Caco-2 (cell line): ENCODE measurements at regions of chr7 and their contacts with region 1.

Region 1: GRCh38 chr7:2800931-2801688 is 43.0 kb downstream of the GNA12 start:
- DNase-seq: no peak
- H3K4me3 ChIP-seq: no peak overlapping the region
- H3K4me3 Mint-ChIP-seq: peak overlapping the region; percentile 84
- H3K27ac Mint-ChIP-seq: peak overlapping the region; percentile 96
- H3K4me1 ChIP-seq: peaks cover 55% of the 10 kb centered on the region
- H3K4me1 Mint-ChIP-seq: peaks cover 56% of the 10 kb centered on the region
- H3K27me3 ChIP-seq: no peaks in the 10 kb centered on the region
- H3K27me3 Mint-ChIP-seq: no peaks in the 10 kb centered on the region
- CTCF ChIP-seq: no peak

Region 2: GRCh38 chr7:2403014-2403717 is 397.9 kb before region 1 on chr7 and contains the start of gene CHST12:
- CTCF ChIA-PET with region 1: no interaction called
- POLR2A ChIA-PET with region 1: no interaction called
- intact Hi-C with region 1: no loop called
- DNase-seq: peak; percentile 95 to 97
- H3K4me3 ChIP-seq: peak within 1 kb of the TSS; percentile 79
- H3K4me3 Mint-ChIP-seq: peak within 1 kb of the TSS; percentile 76
- H3K27ac Mint-ChIP-seq: no peak within 1 kb of the TSS
- H3K4me1 ChIP-seq: peaks cover 6% of the 10 kb centered on the region; the same call in 1 of the 2 replicates
- H3K4me1 Mint-ChIP-seq: peaks cover 18% of the 10 kb centered on the region
- H3K27me3 ChIP-seq: no peaks in the 10 kb centered on the region
- H3K27me3 Mint-ChIP-seq: no peaks in the 10 kb centered on the region
- CTCF ChIP-seq: no peak
- total RNA-seq, gene CHST12: 26.0 and 28.0 TPM in 2 replicates

Region 3: DNA sequence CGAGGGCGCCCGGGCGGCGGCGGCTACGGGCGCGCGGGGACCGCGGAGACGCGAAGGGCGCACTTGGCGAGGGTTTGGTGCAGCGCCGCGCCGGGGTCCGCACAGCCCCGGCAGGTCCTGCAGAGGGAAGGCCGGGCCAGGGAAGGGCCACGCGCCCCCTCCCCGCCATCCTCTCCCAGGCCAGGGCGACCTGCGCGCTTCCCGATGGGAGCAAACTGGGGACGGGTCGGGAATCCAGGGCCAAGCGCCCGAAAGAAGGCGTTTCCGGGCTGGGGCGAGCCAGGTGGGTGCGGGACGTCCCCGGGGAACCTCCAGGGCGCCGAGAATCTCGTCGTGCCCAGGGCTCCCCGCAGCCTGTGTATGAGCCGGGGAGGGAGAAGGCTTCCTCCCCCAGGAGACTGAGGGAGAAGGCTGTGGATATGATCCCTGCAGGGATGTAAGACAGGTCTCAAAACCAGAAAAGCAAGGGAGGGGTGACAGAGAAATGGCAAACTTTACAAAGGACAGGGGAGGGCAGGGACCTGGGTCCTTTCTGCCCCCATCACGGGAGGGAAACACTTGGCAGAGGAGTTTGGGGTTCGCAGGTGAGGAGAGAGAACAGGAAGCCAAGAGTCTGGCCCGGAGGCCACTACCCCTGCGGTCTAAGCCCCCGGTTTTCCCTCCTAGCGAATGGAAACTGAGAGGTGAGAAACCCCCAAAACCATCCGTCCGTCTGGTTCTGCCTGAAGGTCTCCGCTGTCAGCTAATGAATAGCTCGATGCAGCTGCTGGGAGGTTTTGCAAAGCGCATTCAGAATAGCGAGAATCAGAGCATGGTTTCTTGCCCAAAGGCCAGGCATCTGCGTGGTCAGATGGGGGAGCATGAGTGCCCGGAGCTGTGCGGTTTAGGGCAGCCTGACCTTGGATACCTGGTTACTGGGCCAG is 112.4 kb before region 1 on chr7:
- CTCF ChIA-PET with region 1: interaction called, 11 read pairs
- POLR2A ChIA-PET with region 1: no interaction called
- intact Hi-C with region 1: no loop called
- DNase-seq: no peak
- H3K4me3 ChIP-seq: no peak overlapping the region
- H3K4me3 Mint-ChIP-seq: no peak overlapping the region
- H3K27ac Mint-ChIP-seq: no peak overlapping the region
- H3K4me1 ChIP-seq: no peaks in the 10 kb centered on the region
- H3K4me1 Mint-ChIP-seq: no peaks in the 10 kb centered on the region
- H3K27me3 ChIP-seq: no peaks in the 10 kb centered on the region
- H3K27me3 Mint-ChIP-seq: no peaks in the 10 kb centered on the region
- CTCF ChIP-seq: no peak

Region 4: GRCh38 chr7:2757904-2758672 is 43.0 kb before region 1 on chr7:
- CTCF ChIA-PET with region 1: interaction called, 7 read pairs
- POLR2A ChIA-PET with region 1: no interaction called
- intact Hi-C with region 1: loop called (anchors 2 kb)
- DNase-seq: peak; percentile 76 to 84
- H3K4me3 ChIP-seq: no peak overlapping the region; the same call in 1 of the 2 replicates
- H3K4me3 Mint-ChIP-seq: peak overlapping the region; percentile 67
- H3K27ac Mint-ChIP-seq: peak overlapping the region; percentile 95
- H3K4me1 ChIP-seq: peaks cover 20% of the 10 kb centered on the region
- H3K4me1 Mint-ChIP-seq: peaks cover 31% of the 10 kb centered on the region
- H3K27me3 ChIP-seq: no peaks in the 10 kb centered on the region
- H3K27me3 Mint-ChIP-seq: no peaks in the 10 kb centered on the region
- CTCF ChIP-seq: no peak

Region 5: DNA sequence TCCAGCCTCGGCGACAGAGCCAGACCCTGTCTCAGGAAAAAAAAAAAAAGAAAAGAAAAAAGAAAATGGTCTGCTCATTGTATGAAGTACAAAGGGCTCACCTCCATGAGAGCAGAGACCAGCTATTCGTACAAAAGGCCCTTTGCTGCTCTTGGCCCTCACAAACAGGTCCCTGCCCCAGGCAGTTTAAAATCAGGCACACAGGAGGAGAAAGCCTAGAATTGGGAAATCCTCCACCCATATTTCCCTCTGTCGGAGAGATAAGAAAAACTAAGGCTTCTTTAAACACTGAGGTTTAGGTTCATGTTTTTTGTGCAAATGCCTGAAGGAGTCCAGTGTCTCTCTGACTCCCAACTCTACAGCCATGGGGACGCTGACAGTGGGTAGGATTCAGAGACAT is 27.9 kb after region 1 on chr7:
- CTCF ChIA-PET with region 1: interaction called, 4 read pairs
- POLR2A ChIA-PET with region 1: no interaction called
- intact Hi-C with region 1: loop called (anchors 1 kb)
- DNase-seq: peak; percentile 61 to 68
- H3K4me3 ChIP-seq: no peak overlapping the region
- H3K4me3 Mint-ChIP-seq: no peak overlapping the region
- H3K27ac Mint-ChIP-seq: peak overlapping the region; percentile 75
- H3K4me1 ChIP-seq: peaks cover 47% of the 10 kb centered on the region
- H3K4me1 Mint-ChIP-seq: peaks cover 63% of the 10 kb centered on the region
- H3K27me3 ChIP-seq: no peaks in the 10 kb centered on the region
- H3K27me3 Mint-ChIP-seq: no peaks in the 10 kb centered on the region
- CTCF ChIP-seq: no peak

Region 6: DNA sequence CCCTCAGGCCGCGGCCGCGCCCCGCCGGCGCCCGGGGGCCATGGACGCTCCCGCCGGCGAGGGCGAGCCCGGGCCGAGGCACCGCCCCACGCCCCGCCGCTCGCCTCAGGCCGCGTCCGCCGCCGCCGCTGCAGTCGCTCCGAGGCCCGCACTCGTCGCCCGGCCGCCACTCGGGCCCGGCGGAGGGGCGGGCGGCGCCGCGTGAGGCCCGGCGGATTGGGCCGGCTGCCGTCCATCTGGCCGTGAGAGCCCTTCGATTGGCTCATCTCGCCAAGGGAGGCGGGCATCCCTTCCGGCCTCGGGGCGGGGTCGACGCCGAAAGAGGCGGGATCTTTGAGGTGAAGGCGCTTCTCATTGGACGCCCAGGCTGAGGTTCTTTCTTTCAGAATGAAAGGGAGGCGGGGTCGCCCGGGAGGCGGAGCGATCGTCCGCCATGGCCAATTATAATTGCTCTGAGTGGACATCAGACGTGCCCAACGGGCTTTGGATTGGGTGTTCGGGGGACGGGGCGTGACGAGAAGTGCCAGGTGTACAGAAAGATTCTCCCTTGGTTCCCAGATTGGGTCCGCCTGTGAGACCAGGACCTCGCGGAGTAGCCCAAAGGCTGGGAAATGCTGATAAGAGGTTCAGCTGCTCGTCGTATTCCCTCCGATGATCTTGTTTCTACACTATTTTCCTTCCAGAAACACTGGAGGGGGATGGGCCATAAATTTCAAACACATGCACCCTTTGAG is 43.2 kb after region 1 on chr7 and contains the start of gene GNA12:
- CTCF ChIA-PET with region 1: no interaction called
- POLR2A ChIA-PET with region 1: no interaction called
- intact Hi-C with region 1: loop called (anchors 5 kb)
- DNase-seq: peak; percentile 99
- H3K4me3 ChIP-seq: peak within 1 kb of the TSS; percentile 94
- H3K4me3 Mint-ChIP-seq: peak within 1 kb of the TSS; percentile 77
- H3K27ac Mint-ChIP-seq: peak within 1 kb of the TSS; percentile 71
- H3K4me1 ChIP-seq: peaks cover 12% of the 10 kb centered on the region
- H3K4me1 Mint-ChIP-seq: peaks cover 6% of the 10 kb centered on the region
- H3K27me3 ChIP-seq: no peaks in the 10 kb centered on the region
- H3K27me3 Mint-ChIP-seq: no peaks in the 10 kb centered on the region
- CTCF ChIP-seq: no peak
- total RNA-seq, gene GNA12: 59.3 and 63.8 TPM in 2 replicates